PC-3 (cell line): ENCODE measurements at regions of chr21 and their contacts with region 1.

Region 1: GRCh38 chr21:21200103-21200642 is 202.0 kb downstream of the NCAM2 start:
- DNase-seq: peak; percentile 85
- ATAC-seq: peak; percentile 99
- H3K4me3 ChIP-seq: 0 out of 2 replicates have a peak overlapping the region, but pooled peaks have one; percentile 9
- H3K27ac ChIP-seq: no peak overlapping the region
- H3K4me1 ChIP-seq: no peaks in the 10 kb centered on the region; the same call in 1 of the 2 replicates
- H3K27me3 ChIP-seq: no peaks in the 10 kb centered on the region
- CTCF ChIP-seq: no peak

Region 2: GRCh38 chr21:21045518-21045917 is 154.7 kb before region 1 on chr21:
- CTCF ChIA-PET with region 1: interaction called, 11 read pairs
- POLR2A ChIA-PET with region 1: no interaction called
- intact Hi-C with region 1: no loop called
- DNase-seq: no peak
- ATAC-seq: no peak
- H3K4me3 ChIP-seq: no peak overlapping the region
- H3K27ac ChIP-seq: no peak overlapping the region
- H3K4me1 ChIP-seq: no peaks in the 10 kb centered on the region
- H3K27me3 ChIP-seq: no peaks in the 10 kb centered on the region
- CTCF ChIP-seq: no peak

Region 3: GRCh38 chr21:21226472-21226871 is 26.3 kb after region 1 on chr21:
- CTCF ChIA-PET with region 1: no interaction called
- POLR2A ChIA-PET with region 1: no interaction called
- intact Hi-C with region 1: no loop called
- DNase-seq: no peak
- ATAC-seq: no peak
- H3K4me3 ChIP-seq: no peak overlapping the region
- H3K27ac ChIP-seq: no peak overlapping the region
- H3K4me1 ChIP-seq: no peaks in the 10 kb centered on the region
- H3K27me3 ChIP-seq: no peaks in the 10 kb centered on the region
- CTCF ChIP-seq: no peak